ENCODE measurements at regions of chr4 and their contacts with region 1.

Region 1: GRCh38 chr4:17447675-17448298 is 64.1 kb downstream of the QDPR start:
- DNase-seq: no peak

Region 2: DNA sequence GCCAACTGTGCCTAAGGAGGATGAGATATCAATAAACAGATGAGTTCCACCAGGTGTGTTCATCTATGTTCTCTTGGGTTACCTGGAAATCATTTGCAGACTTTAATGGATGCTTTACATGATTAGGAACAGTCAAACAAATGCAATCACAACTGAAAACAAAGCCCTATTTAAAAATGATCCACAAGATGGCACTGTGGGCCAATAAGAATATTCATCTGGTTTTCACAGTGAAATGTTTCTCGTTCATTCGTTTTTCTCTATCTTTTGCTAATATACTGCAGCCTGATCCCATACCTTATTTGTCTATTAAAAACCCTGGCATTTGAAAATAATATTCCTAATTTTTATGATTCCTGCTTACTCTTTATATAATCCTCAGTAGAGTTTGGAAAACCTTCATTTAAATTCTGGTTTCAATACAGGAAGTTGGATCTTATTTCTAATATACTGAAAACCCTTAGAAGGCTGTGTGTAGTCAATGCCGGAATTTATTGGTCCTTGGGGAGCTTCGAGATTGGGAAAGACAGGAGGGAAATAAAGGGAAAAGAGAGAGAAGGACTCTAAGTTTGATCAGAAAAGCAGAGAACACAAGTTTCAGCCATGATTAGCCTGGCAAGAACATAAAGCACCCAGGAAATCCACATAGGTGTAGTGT is 1157.8 kb before region 1 on chr4:
- intact Hi-C with region 1: loop called (anchors 2 kb)
- DNase-seq: no peak

Region 3: DNA sequence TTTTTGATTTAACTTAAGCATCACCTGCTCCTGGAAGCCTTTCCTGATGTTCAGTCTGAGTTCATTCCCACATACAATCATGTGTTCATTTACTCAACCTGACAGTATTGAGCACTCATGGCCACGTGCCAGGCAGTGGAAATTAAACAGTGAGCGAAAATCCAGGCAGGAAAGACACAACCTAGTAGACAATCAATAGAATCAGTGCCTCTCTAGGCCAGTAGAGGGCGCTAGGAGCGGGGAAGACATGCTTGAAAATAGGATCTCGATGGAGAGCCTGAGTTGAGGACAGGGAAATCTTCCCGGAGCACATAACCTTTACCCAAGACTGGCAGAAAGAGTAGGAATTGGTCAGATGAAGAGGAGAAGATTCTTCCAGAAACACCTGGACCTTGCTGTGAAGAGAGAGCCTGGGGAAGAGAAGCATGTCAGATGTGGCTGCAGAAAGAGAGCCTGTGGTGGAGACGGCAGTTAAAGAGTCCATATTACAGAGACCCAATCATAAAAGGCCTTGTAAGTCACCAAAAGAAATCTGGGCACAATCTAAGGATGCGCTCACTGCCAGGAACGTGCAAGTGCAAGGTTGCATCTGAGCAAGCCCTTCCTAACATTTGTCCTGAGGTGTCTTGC is 652.9 kb before region 1 on chr4:
- intact Hi-C with region 1: loop called (anchors 5 kb)
- DNase-seq: no peak

Region 4: DNA sequence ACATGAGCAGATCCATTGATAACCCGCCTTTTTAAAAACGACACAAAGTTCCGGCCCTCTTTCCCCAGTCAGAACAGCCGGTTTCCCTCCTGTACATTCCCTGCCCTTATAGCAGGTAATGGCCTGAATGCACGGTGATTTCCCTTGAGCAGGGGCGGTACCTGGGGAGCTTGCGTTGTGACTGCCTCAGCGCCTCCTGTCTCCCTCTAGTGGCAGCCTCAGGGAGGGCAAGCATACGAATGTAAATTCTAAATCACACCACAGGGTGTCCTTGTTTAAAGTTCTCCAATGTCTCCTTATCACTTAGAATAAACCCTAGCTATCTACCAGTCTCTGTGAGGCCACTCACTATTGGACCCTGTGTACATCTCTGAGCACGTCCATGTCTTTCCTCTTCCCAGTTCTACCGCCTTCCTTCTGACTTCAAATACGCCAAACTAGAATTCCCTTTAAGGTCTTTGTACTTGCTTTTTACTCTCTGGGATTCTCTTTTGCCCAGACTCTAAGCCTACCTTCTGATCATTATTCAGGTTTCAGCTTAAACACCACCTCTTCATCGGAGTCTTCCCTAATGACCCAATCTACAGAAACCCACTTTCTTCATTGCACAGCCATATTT is 531.0 kb before region 1 on chr4:
- intact Hi-C with region 1: loop called (anchors 10 kb)
- DNase-seq: no peak

Region 5: GRCh38 chr4:17206829-17207801 is 240.7 kb before region 1 on chr4:
- intact Hi-C with region 1: no loop called
- DNase-seq: no peak

Region 6: DNA sequence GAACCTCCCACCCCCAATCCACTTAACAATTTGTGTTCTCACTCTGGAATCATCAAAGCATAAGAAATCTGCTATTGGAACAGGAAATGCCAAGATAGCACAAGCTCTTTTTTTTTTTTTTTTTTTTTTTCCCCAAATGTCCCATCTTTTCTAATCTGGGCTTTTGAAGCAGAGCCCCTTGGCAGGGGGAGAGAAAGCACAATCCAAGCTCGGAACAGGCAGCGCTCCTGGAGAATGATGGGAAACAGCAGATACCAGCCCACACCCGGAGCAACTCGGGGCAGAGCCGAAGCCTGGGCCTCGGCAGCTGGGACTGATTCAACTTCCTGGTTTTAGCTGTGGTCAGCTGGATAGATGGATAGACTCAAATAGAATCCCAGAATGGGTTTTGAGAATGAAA is 171.0 kb before region 1 on chr4:
- intact Hi-C with region 1: no loop called
- DNase-seq: no peak

Region 7: GRCh38 chr4:17347445-17347844 is 100.3 kb before region 1 on chr4:
- intact Hi-C with region 1: loop called (anchors 5 kb)
- DNase-seq: no peak

Region 8: DNA sequence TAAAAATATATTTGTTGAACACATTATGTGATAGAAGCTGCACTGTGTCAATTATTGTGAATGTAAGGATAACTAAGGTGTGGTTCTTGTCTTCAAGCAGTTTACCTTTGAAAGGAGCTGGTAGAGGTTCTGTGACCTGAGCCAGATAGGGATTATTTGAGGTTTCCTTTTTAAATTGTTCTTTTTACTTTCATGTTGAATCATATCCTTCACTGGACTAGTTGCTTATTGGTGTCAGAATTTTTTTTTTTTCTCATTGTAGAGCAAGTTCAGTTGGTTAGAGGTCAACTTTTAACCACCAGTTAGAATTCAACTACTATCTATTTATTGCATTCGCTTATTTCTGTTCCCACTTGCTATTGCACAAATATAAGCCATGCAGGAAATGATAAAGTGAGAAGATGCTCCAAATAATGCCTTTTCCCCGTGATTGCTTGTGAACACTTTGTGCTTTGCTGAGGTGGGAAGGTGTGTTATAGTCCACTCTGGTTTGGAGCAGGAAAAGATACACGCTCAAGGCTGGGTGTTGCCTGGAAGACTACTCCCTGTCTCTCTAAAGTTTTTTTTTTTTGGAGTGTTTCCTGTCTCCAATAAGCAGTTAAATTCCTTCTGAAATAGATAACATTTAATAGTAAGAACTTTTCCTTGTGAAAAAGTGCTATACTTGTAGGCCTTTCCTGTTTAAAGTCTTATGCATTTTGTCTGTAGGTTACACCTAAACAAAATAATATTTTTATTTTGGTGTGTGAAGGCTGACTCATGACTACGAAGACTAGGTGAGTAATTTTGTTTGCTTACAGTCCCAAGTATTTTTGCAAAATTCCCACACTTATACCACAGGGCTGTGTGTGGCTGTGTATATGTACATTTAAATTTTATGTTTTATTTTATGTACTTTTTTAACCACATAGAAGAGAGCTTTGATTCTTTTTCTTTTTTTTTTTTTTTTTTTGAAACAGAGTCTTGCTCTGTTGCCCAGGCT is 657.5 kb after region 1 on chr4:
- intact Hi-C with region 1: no loop called
- DNase-seq: no peak